GM12878 (cell line): ENCODE measurements at regions of chr16 and their contacts with region 1.

Region 1: GRCh38 chr16:75415169-75415905 is 18.0 kb downstream of the CFDP1 start:
- DNase-seq: no peak
- ATAC-seq: no peak
- H3K4me3 ChIP-seq: no peak overlapping the region
- H3K27ac ChIP-seq: no peak overlapping the region
- H3K4me1 ChIP-seq: no peaks in the 10 kb centered on the region
- H3K27me3 ChIP-seq: no peaks in the 10 kb centered on the region
- CTCF ChIP-seq: no peak
- EP300 ChIP-seq: no peak
- POLR2A ChIP-seq: no peak
- RAD21 ChIP-seq: no peak

Region 2: DNA sequence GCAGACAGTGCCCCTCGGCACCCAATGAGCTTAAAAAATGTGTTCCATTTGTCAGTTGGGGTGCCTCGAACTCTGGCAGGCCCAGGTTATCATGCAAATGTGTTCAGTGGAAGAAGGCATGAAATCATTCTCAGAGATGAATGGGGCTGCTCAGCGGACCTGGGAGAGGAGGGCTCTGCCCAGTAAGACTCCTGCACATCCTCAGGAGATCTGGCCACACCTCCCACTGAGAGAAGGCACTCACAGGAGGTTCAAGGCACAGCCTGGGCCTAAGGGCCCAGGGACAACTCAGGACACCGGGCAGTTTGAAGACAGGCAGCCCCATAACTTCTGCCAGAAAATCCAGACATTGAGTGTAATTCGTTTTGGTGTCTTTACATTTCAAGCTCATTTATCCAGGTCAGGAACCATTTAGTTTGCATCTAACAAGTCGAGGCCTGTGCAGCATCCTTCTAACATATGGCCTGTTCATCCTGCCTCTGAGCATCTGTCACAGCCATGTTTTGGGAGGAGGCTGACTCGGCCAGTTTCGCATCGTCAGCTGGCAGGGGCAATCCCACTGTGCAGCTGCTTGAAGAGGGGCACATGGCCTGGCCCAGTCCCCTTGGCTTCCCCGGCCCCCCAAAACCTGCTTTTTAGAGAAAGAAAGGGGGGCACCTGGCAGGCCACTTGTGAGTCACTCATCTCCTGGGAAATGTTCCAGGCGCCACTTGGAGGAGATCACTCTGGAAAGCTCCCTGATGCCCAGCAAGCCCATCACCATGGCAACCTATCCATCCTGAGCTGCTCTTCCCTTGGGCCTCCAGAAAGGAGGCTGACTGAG is 132.7 kb before region 1 on chr16:
- CTCF ChIA-PET with region 1: no interaction called
- POLR2A ChIA-PET with region 1: interaction called, 10 read pairs
- RAD21 ChIA-PET with region 1: no interaction called
- SMC1A ChIA-PET with region 1: no interaction called
- in situ Hi-C with region 1: no loop called
- intact Hi-C with region 1: no loop called
- DNase-seq: no peak
- ATAC-seq: no peak; the same call in 2 of the 3 replicates
- H3K4me3 ChIP-seq: no peak overlapping the region
- H3K27ac ChIP-seq: no peak overlapping the region
- H3K4me1 ChIP-seq: peaks cover under 1% of the 10 kb centered on the region; the same call in 1 of the 2 replicates
- H3K27me3 ChIP-seq: no peaks in the 10 kb centered on the region
- CTCF ChIP-seq: no peak
- EP300 ChIP-seq: no peak
- POLR2A ChIP-seq: no peak
- RAD21 ChIP-seq: no peak

Region 3: GRCh38 chr16:75333721-75334163 is 81.6 kb before region 1 on chr16:
- CTCF ChIA-PET with region 1: no interaction called
- POLR2A ChIA-PET with region 1: no interaction called
- RAD21 ChIA-PET with region 1: no interaction called
- SMC1A ChIA-PET with region 1: no interaction called
- in situ Hi-C with region 1: no loop called
- intact Hi-C with region 1: no loop called
- DNase-seq: peak; percentile 19
- ATAC-seq: peak; percentile 42; the same call in 2 of the 3 replicates
- H3K4me3 ChIP-seq: no peak overlapping the region
- H3K27ac ChIP-seq: no peak overlapping the region
- H3K4me1 ChIP-seq: peaks cover 12% of the 10 kb centered on the region
- H3K27me3 ChIP-seq: no peaks in the 10 kb centered on the region
- CTCF ChIP-seq: no peak
- EP300 ChIP-seq: no peak
- POLR2A ChIP-seq: no peak
- RAD21 ChIP-seq: no peak